Activated naive CD8-positive, alpha-beta T cell treated with anti-CD3 and anti-CD28 coated beads, Interleukin-2, amount 10 ng/mL, durations not matched to agents 7 days and 5 days (primary cell): ENCODE measurements at regions of chr11 and their contacts with region 1.

Region 1: DNA sequence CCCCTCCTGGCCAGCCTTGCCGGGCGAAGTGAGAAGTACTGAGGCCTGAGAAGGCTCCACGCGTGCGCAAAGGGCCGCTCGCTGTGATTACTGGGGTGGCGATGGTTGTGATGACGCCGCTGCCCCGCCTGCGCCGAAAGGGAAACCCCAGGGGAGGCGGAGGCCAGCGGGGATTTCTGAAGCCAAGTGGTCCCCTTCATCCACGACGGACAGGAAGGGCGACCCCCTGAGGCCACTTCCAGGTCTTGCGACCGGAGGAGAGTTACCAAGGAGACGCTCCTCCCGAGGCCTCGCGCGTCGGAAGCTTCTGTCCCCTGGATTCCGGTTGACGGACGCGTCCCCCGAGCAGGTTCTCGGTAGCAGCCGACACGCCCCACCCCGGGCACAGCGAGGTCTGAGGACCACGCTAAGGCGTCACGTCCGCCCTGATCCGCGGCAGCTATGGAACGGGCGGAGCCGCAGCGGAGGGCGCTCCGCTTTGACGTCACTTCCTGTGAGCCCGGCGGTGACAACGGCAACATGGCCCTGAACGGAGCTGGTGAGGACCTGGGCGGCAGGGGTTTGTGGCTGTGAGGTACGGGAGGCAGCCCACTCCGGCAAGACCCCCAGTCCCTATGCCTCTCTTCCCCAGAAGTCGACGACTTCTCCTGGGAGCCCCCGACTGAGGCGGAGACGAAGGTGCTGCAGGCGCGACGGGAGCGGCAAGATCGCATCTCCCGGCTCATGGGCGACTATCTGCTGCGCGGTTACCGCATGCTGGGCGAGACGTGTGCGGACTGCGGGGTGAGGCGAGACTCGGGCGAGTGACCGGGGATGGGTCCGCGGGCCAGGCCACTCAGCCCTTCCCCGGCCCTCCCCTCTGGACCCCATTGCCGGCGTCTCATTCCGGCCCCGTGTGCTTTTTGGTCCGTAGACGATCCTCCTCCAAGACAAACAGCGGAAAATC is at the start of gene ZNRD2:
- DNase-seq: peak; percentile 97
- ATAC-seq: peak; percentile 72
- H3K4me3 Mint-ChIP-seq: peak within 1 kb of the TSS; percentile 94
- H3K27ac Mint-ChIP-seq: peak within 1 kb of the TSS; percentile 98
- H3K4me1 Mint-ChIP-seq: peaks cover 58% of the 10 kb centered on the region
- H3K27me3 Mint-ChIP-seq: no peaks in the 10 kb centered on the region
- total RNA-seq, gene ZNRD2: 27.2 to 30.0 TPM

Region 2: DNA sequence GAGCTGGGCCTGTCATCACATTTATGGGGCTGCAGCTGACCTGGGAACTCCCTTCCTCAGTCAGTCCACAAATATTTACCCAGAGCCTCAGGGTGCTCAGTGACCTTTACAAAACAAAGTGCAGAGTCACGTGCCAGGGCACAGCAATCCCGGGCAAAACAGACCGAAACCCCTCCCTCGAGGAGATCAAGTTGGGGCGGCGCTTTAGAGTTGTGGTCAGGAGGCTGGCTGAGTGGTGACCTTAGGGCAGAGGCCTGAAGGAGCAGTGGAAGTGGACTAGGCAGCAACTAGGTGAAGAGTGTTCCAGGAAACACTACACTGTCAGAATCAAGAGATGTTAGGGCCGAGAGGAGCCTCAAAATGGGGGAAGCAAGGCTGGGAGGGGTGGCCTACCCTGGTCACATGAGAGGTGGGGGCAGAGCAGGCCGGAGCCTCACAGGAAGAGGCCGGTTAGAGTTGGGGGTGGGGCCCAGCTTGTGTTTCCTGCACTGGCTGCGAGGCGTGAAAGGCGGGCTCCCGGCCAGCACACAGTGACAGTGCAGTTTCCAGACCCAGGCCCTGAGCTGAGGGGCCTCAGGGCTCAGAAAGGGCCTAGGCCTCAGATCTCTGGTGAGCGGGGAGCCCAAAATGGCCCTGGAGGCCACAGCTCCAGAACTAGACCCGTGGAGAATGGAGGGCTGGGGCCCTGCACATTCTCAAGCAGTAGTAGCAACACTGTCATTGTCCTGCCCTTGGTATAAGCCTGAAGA is 151.4 kb before region 1 on chr11:
- POLR2A ChIA-PET with region 1: interaction called, 13 read pairs
- DNase-seq: peak; percentile 86
- ATAC-seq: peak; percentile 39
- H3K4me3 Mint-ChIP-seq: peak overlapping the region; percentile 100
- H3K27ac Mint-ChIP-seq: peak overlapping the region; percentile 100
- H3K4me1 Mint-ChIP-seq: peaks cover 46% of the 10 kb centered on the region
- H3K27me3 Mint-ChIP-seq: peaks cover 2% of the 10 kb centered on the region

Region 3: GRCh38 chr11:65524741-65525545 is 45.3 kb before region 1 on chr11 and contains the start of gene SCYL1:
- POLR2A ChIA-PET with region 1: interaction called, 15 read pairs
- DNase-seq: peak; percentile 88
- ATAC-seq: peak; percentile 59
- H3K4me3 Mint-ChIP-seq: peak within 1 kb of the TSS; percentile 87
- H3K27ac Mint-ChIP-seq: peak within 1 kb of the TSS; percentile 93
- H3K4me1 Mint-ChIP-seq: peaks cover 42% of the 10 kb centered on the region
- H3K27me3 Mint-ChIP-seq: no peaks in the 10 kb centered on the region
- total RNA-seq, gene SCYL1: 74.2 to 74.9 TPM

Region 4: DNA sequence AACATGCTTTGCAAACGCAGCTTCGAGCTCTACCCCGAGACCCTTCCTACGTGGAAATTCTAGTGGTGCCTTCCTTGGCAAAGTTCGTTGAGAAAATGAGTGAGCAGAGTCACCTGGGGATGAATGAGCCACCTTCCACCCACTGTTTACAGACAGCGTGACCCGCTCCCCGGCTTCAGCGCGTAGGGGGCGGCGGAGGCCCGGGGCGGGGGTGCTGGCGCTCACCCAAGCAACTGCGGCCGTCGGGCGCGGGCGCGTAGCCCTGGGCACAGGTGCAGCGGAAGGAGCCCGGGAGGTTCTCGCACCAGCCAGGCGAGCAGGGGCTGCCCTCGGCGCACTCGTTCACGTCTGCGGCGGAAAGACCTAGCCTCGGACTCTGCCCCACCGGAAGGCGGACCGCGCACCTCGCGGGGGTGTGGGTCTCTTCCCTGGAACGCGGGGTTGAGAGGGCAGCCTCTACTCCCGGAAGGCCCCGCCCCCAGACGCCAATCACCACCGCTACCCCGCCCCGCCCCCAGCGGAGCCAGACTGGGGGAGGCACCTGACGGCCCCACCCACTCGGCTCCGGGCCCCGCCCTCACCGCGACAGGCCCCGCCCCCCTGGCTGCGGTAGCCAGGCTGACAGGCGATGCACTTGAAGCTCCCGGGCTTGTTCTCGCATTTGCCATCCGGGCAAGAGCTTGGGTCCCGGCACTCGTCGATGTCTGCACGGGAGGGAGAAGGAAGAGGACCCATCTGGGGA is 23.9 kb before region 1 on chr11:
- POLR2A ChIA-PET with region 1: interaction called, 51 read pairs
- DNase-seq: peak; percentile 100
- ATAC-seq: peak; percentile 81
- H3K4me3 Mint-ChIP-seq: peak overlapping the region; percentile 80
- H3K27ac Mint-ChIP-seq: peak overlapping the region; percentile 83
- H3K4me1 Mint-ChIP-seq: peaks cover 28% of the 10 kb centered on the region
- H3K27me3 Mint-ChIP-seq: no peaks in the 10 kb centered on the region

Region 5: GRCh38 chr11:65558002-65558931 is 12.0 kb before region 1 on chr11 and contains the start of gene LTBP3:
- POLR2A ChIA-PET with region 1: interaction called, 38 read pairs
- DNase-seq: peak; percentile 61
- ATAC-seq: peak; percentile 37
- H3K4me3 Mint-ChIP-seq: peak within 1 kb of the TSS; percentile 86
- H3K27ac Mint-ChIP-seq: peak within 1 kb of the TSS; percentile 87
- H3K4me1 Mint-ChIP-seq: peaks cover 38% of the 10 kb centered on the region
- H3K27me3 Mint-ChIP-seq: no peaks in the 10 kb centered on the region
- total RNA-seq, gene LTBP3: 116 to 119 TPM

Region 6: DNA sequence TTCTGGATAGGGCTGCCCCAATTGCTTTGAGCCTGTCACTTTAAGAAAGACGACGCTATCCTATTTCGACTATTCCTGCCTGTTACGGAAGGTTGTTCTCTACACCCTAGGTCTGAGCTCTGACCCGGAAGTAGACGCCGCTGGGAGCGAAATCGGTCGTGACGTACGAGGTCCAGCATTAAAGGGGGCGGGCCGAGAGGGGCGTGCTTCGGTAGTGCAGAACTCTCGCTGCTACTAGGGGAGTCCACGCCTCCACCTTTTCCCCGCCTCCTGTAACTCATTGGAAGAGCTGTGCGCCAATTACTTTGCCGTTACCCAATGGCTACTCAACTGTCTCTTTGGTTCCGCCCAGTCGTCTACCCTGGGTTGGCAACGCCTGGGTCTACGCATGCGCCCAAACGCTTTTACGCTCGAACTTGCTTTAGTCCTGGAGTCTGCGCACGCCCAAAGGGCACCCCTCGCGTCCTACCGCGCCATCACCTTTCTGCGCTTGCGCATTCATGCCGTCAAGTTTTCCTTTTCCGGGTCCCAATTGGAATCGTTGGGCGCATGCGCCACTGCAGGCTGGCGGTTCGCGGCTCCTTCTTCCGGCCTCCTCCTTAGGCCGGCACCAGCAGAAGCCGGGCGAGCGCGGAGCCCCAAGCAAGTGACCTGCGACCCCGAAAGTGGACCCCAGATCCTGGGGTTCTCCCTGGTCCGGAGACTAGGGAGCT is 45.1 kb after region 1 on chr11 and contains the start of gene PCNX3:
- POLR2A ChIA-PET with region 1: interaction called, 23 read pairs
- DNase-seq: peak; percentile 97
- ATAC-seq: peak; percentile 85
- H3K4me3 Mint-ChIP-seq: peak within 1 kb of the TSS; percentile 97
- H3K27ac Mint-ChIP-seq: peak within 1 kb of the TSS; percentile 96
- H3K4me1 Mint-ChIP-seq: peaks cover 22% of the 10 kb centered on the region
- H3K27me3 Mint-ChIP-seq: no peaks in the 10 kb centered on the region
- total RNA-seq, gene PCNX3: 57.2 to 60.2 TPM